MCF 10A (cell line): ENCODE measurements at regions of chr20 and their contacts with region 1.

Region 1: GRCh38 chr20:64079273-64080012 is at the start of gene RGS19:
- DNase-seq: peak; percentile 47
- H3K4me3 Mint-ChIP-seq: peak within 1 kb of the TSS; percentile 73
- H3K27ac Mint-ChIP-seq: peak within 1 kb of the TSS; percentile 83
- H3K4me1 Mint-ChIP-seq: peaks cover 8% of the 10 kb centered on the region
- H3K27me3 Mint-ChIP-seq: no peaks in the 10 kb centered on the region
- CTCF ChIP-seq: no peak
- total RNA-seq, gene RGS19: 8.2 and 8.8 TPM in 2 replicates

Region 2: DNA sequence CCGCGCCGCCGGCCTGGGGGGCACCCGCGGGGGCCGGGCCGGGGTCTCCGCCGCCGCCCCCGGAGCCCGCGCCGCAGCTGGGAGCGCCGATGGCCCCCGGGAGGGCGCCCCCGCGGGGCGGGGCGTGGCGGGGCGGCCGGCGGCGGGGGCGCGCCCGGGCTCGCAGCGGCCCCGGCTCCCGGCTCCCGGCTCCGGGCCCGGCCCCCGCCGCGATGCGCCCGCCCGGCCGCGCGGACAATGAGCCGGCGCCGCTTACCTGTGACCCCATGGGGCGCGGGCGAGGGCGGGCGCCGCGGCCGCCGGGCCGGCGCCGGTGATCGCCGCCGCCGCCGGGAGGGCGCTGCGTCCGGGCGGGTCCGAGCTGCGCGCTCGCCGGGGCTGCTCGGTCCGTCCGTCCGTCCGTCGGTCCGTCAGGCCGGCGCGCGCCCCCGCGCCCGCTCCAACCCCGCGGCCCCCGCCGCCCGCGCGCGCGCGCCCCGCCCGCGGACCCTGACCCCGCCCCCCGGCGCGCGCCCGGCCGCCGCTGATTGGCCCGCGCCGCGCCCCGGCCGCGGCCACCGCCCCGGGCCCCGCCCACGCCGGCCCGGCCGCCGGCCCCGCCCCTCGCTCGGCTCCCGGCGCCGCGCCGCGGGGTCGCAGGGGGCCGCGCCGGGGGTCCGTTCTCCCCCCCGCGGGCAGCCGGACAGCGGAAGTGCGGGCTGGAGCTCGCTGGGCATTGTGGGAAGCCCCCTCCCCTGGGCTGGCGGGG is 248.4 kb before region 1 on chr20 and contains the start of gene ZBTB46:
- CTCF ChIA-PET with region 1: no interaction called
- POLR2A ChIA-PET with region 1: no interaction called
- intact Hi-C with region 1: no loop called
- DNase-seq: peak; percentile 37
- H3K4me3 Mint-ChIP-seq: peak within 1 kb of the TSS; percentile 62
- H3K27ac Mint-ChIP-seq: no peak within 1 kb of the TSS
- H3K4me1 Mint-ChIP-seq: peaks cover 5% of the 10 kb centered on the region
- H3K27me3 Mint-ChIP-seq: peaks cover 19% of the 10 kb centered on the region
- CTCF ChIP-seq: no peak
- total RNA-seq, gene ZBTB46: 0.63 and 0.71 TPM in 2 replicates

Region 3: GRCh38 chr20:63969838-63970713 is 109.4 kb before region 1 on chr20 and contains the start of gene ZNF512B:
- CTCF ChIA-PET with region 1: no interaction called
- POLR2A ChIA-PET with region 1: no interaction called
- intact Hi-C with region 1: no loop called
- DNase-seq: peak; percentile 58
- H3K4me3 Mint-ChIP-seq: peak within 1 kb of the TSS; percentile 75
- H3K27ac Mint-ChIP-seq: peak within 1 kb of the TSS; percentile 71
- H3K4me1 Mint-ChIP-seq: peaks cover 30% of the 10 kb centered on the region
- H3K27me3 Mint-ChIP-seq: no peaks in the 10 kb centered on the region
- CTCF ChIP-seq: no peak
- total RNA-seq, gene ZNF512B: 23.5 and 26.6 TPM in 2 replicates

Region 4: GRCh38 chr20:64119681-64120341 is 40.4 kb after region 1 on chr20:
- CTCF ChIA-PET with region 1: interaction called, 93 read pairs
- POLR2A ChIA-PET with region 1: interaction called, 5 read pairs
- intact Hi-C with region 1: loop called (anchors 1 kb)
- DNase-seq: no peak
- H3K4me3 Mint-ChIP-seq: no peak overlapping the region
- H3K27ac Mint-ChIP-seq: no peak overlapping the region
- H3K4me1 Mint-ChIP-seq: no peaks in the 10 kb centered on the region
- H3K27me3 Mint-ChIP-seq: peaks cover 38% of the 10 kb centered on the region
- CTCF ChIP-seq: no peak